Gastrocnemius medialis (tissue), 4 donors: ENCODE measurements at regions of chr10 and their contacts with region 1.

Region 1: DNA sequence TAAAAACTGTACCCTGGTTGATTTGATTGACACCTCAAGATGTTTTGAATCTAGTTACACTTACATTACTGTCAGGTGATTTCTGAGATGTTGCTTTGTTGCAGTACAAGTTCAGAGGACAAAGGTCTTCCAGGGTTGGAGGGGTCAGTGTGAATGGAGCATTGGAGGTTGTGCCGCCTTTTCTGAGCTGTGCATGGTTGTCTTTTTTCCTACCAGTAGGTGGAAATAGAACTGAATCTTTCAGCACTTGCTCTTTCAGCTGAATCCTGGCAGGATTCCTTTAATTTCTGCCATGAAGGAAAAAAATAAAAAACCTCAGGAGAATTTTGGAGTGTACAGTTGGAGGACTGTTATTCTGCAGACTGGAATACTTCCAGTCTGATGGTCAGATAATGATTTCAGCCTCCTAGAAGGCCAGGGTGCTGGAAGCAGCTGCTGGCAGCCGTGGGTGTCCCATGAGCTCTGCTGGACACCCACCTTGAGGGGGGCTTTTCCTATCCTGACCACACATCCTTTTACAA is 82.7 kb downstream of the PLCE1 start:
- DNase-seq: no peak
- ATAC-seq: peak; percentile 76 to 78
- H3K4me3 ChIP-seq: no peak overlapping the region
- H3K27ac ChIP-seq: no peak overlapping the region
- H3K4me1 ChIP-seq: peaks cover 16 to 18% of the 10 kb centered on the region in 2 donors
- H3K27me3 ChIP-seq: no peaks in the 10 kb centered on the region
- CTCF ChIP-seq: peak in 4 of 5 experiments; percentile 23 to 56 (median 36)
- POLR2A ChIP-seq: no peak

Region 2: GRCh38 chr10:94315024-94315451 is 238.7 kb after region 1 on chr10:
- in situ Hi-C with region 1: loop called in 2 of 4 experiments (anchors 10 kb)
- intact Hi-C with region 1: loop called (anchors 5 kb)
- DNase-seq: no peak
- ATAC-seq: no peak
- H3K4me3 ChIP-seq: no peak overlapping the region
- H3K27ac ChIP-seq: no peak overlapping the region
- H3K4me1 ChIP-seq: no peaks in the 10 kb centered on the region
- H3K27me3 ChIP-seq: no peaks in the 10 kb centered on the region
- CTCF ChIP-seq: no peak
- POLR2A ChIP-seq: no peak

Region 3: DNA sequence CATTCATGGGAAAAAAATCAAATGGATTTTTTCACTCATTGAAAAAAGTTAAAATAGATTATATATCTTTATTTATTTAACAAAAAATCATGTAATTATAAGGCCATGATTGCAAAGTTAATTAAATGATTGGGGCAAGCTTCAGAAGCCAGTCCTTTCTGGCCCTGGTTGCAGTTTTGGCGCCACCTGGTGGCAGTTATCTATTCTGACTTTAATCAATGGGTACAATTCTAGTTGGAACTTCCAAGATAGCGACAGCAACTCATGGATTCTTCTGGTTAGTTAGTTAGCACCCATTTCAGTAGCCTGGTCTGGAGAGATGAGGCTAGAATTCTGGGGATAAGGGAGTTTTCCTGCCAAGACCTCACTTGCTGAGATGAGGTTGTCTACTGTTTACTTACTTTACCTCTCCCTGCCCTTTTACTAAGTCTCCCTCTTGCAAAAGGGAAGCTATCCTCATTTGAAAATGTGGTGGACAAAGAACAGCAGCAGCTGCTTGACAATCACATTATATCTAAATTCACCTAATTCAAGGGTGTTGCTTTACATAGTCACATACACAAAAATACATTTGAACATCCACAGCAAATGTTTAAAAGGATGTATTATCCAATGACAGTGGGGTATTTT is 244.0 kb after region 1 on chr10:
- in situ Hi-C with region 1: loop called in 2 of 4 experiments (anchors 10 kb)
- intact Hi-C with region 1: loop called (anchors 5 kb)
- DNase-seq: peak; percentile 25 to 36
- ATAC-seq: peak in 1 of 2 donors; percentile 55
- H3K4me3 ChIP-seq: no peak overlapping the region
- H3K27ac ChIP-seq: no peak overlapping the region
- H3K4me1 ChIP-seq: no peaks in the 10 kb centered on the region
- H3K27me3 ChIP-seq: no peaks in the 10 kb centered on the region
- CTCF ChIP-seq: peak; percentile 63 to 86 (median 79)
- POLR2A ChIP-seq: no peak